ENCODE measurements at regions of chr5 and their contacts with region 1.

Region 1: GRCh38 chr5:173745123-173745522 is 128.7 kb upstream of the BOD1 start:
- DNase-seq: peak; percentile 33
- ATAC-seq: peak; percentile 70
- H3K4me3 Mint-ChIP-seq: peak overlapping the region; percentile 29
- H3K27ac Mint-ChIP-seq: peak overlapping the region; percentile 80
- H3K4me1 Mint-ChIP-seq: peaks cover 60% of the 10 kb centered on the region
- H3K27me3 Mint-ChIP-seq: no peaks in the 10 kb centered on the region
- CTCF ChIP-seq: no peak

Region 2: DNA sequence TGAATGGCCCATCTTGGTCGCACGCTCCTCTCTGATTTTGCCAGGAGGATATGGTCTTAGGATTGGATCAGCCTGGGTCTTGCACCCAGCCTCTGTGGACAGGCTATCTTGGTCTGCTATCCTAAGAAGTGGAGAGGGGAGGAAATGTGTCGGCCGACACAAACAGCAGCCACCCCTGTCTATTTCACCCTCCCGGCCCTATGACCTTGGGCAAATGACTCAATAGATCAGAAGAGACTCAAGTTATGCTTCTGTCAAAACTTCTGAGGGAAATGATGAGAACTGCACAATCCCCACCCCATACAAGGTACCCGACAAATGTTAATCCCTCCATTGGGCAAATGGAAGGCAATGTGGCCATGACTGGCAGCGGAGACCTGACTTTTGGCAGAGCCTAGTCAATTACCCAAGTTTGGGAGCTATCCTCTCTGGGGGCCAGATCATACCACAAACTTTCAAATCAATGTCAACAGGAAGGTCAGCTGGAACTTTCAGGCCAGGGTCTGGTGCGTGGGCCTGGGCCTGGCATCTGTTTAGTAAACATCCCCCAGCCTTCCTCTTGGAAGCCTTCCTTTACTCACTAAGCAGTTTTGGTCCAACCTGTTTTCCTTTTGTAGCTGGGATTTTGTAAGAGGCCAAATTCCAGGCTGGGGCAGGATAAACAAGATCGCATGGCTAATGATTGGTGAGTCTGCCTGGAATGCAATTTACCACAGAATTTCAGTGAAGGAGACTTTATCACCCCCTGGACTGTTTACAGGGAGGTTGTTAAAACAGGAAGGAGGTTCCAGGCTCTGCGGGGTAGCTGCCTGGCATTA is 78.8 kb after region 1 on chr5:
- CTCF ChIA-PET with region 1: no interaction called
- POLR2A ChIA-PET with region 1: interaction called, 3 read pairs
- intact Hi-C with region 1: loop called (anchors 2 kb)
- DNase-seq: no peak
- ATAC-seq: no peak
- H3K4me3 Mint-ChIP-seq: no peak overlapping the region
- H3K27ac Mint-ChIP-seq: peak overlapping the region; percentile 42
- H3K4me1 Mint-ChIP-seq: peaks cover 86% of the 10 kb centered on the region
- H3K27me3 Mint-ChIP-seq: no peaks in the 10 kb centered on the region
- CTCF ChIP-seq: no peak

Region 3: DNA sequence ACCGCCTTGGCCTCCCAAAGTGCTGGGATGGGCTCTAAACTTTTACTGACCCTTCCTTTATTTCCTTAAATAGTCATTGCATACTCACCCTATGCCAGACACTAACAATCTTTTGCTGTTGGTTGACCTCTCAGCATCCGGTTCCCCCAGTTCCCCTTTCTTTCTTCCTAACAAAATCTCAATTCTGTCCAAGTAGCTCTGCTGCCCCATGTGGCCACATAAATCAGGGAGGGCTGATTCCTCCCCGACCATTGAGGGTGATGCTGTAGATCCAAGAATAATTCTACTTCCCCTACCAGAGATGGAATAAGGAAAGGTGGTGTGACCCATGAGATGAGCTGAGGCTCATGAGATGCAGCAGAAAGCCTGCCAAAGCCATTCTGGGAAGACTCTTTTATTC is 663.9 kb after region 1 on chr5:
- CTCF ChIA-PET with region 1: no interaction called
- POLR2A ChIA-PET with region 1: no interaction called
- intact Hi-C with region 1: no loop called
- DNase-seq: no peak
- ATAC-seq: no peak
- H3K4me3 Mint-ChIP-seq: no peak overlapping the region
- H3K27ac Mint-ChIP-seq: no peak overlapping the region
- H3K4me1 Mint-ChIP-seq: no peaks in the 10 kb centered on the region
- H3K27me3 Mint-ChIP-seq: no peaks in the 10 kb centered on the region
- CTCF ChIP-seq: no peak

Measured in activated B cell treated with CpG ODN at 0.5 μM for 24 hours (primary cell).